K562 (cell line): ENCODE measurements at regions of chr18 and their contacts with region 1.

Region 1: GRCh38 chr18:55465313-55465712 is 122.7 kb downstream of the TCF4 start:
- DNase-seq: no peak
- ATAC-seq: no peak
- H3K4me3 ChIP-seq: no peak overlapping the region
- H3K27ac ChIP-seq: no peak overlapping the region
- H3K4me1 ChIP-seq: no peaks in the 10 kb centered on the region
- H3K27me3 ChIP-seq: no peaks in the 10 kb centered on the region
- CTCF ChIP-seq: no peak
- EP300 ChIP-seq: no peak
- POLR2A ChIP-seq: no peak
- RAD21 ChIP-seq: no peak

Region 2: DNA sequence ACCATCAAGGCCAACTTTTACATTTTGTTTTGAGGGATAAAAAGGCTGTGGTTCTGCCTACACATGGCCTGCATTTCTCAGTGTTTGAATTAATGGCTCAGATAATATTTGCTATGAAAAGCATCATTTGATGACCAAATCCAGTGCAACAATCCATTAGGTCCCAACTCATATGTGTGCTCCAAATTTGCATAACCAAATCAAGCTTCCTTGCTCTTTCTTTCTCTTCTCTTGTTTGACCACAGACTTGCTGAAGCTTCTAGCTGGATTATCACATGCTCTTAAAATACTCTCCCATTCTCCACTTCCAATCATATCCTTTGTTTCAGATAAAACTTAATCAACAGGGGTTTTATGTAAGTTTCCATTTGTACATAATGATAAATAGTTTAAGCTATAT is 24.3 kb before region 1 on chr18:
- CTCF ChIA-PET with region 1: no interaction called
- POLR2A ChIA-PET with region 1: no interaction called
- in situ Hi-C with region 1: no loop called
- intact Hi-C with region 1: loop called (anchors 2 kb)
- DNase-seq: no peak
- ATAC-seq: no peak
- H3K4me3 ChIP-seq: no peak overlapping the region
- H3K27ac ChIP-seq: no peak overlapping the region
- H3K4me1 ChIP-seq: no peaks in the 10 kb centered on the region; a peak in 2 of 5 replicates
- H3K27me3 ChIP-seq: no peaks in the 10 kb centered on the region
- CTCF ChIP-seq: no peak
- EP300 ChIP-seq: no peak
- POLR2A ChIP-seq: no peak
- RAD21 ChIP-seq: no peak

Region 3: DNA sequence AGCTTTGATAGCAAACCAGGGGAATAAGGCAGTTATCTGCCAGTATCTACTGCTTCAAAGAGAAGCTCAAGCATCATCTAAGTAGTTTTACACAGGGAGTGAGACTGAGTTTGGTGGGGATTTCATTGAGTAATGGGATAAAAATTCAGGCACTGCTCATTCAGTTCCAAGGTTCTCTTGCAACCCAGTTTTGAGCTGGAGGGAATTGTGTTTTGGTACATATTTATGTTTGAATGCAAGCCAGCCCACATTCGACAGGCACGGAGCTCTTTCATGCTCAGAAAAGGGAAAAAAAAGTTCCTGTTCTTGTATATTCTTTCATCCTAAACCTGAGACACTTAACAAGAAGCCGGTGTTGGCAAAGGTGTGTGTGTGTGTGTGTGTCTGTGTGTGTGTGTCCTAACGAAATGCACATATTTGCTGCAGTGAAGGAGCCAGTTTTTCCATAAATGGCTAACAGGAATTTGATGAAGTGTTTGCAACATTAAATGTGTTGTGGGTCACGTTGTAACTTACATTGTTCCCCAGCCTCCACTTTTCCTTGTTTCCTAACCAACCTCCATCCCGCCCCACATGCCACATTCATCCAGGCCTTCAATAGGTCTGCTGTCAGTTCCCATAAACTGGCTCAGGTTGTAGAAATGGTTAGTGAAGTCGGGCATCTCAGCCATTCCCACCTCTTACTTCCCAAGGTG is 862.0 kb after region 1 on chr18:
- CTCF ChIA-PET with region 1: no interaction called
- POLR2A ChIA-PET with region 1: no interaction called
- in situ Hi-C with region 1: no loop called
- intact Hi-C with region 1: no loop called
- DNase-seq: no peak
- ATAC-seq: no peak
- H3K4me3 ChIP-seq: no peak overlapping the region
- H3K27ac ChIP-seq: no peak overlapping the region
- H3K4me1 ChIP-seq: no peaks in the 10 kb centered on the region
- H3K27me3 ChIP-seq: no peaks in the 10 kb centered on the region
- CTCF ChIP-seq: no peak
- EP300 ChIP-seq: no peak
- POLR2A ChIP-seq: no peak
- RAD21 ChIP-seq: no peak